H1 (cell line): ENCODE measurements at regions of chr10 and their contacts with region 1.

Region 1: GRCh38 chr10:124659380-124659779 is 84.8 kb downstream of the FAM53B start:
- DNase-seq: no peak
- H3K4me3 ChIP-seq: no peak overlapping the region
- H3K27ac ChIP-seq: no peak overlapping the region
- H3K4me1 ChIP-seq: peaks cover 0 to 3% (median 0%) of the 10 kb centered on the region in 4 experiments; a peak in 2 of 7 replicates
- H3K27me3 ChIP-seq: no peaks in the 10 kb centered on the region
- CTCF ChIP-seq: no peak
- EP300 ChIP-seq: no peak
- POLR2A ChIP-seq: no peak
- RAD21 ChIP-seq: no peak

Region 2: GRCh38 chr10:124647421-124648130 is 11.8 kb before region 1 on chr10:
- CTCF ChIA-PET with region 1: interaction called, 11 read pairs
- POLR2A ChIA-PET with region 1: no interaction called
- DNase-seq: no peak
- H3K4me3 ChIP-seq: no peak overlapping the region
- H3K27ac ChIP-seq: no peak overlapping the region
- H3K4me1 ChIP-seq: peaks cover 0 to 24% (median 17%) of the 10 kb centered on the region in 4 experiments; a peak in 6 of 7 replicates
- H3K27me3 ChIP-seq: no peaks in the 10 kb centered on the region
- CTCF ChIP-seq: peak in 2 of 3 experiments; percentile 15 to 20; a peak in 2 of 4 replicates
- EP300 ChIP-seq: no peak
- POLR2A ChIP-seq: no peak
- RAD21 ChIP-seq: peak in 1 of 2 experiments; percentile 17; a peak in 1 of 4 replicates

Region 3: DNA sequence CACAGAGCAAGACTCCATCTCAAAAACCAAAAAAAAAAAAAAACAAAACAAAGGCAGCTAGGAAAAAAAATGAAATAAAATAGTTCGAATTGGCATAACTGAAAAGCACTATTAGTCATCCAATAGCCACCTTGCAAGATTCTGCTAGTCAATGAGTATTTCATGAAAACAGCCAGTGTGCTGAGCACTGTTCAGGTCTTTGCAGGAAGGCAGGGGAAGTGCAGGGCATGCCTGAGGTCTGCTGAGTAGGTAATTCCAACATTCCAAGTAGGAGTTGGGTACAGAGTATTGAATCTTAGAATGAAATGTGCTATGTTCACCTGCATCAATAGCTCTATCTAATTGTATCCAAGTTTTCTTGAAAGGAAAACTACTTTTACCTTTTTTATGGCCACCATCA is 165.1 kb after region 1 on chr10:
- CTCF ChIA-PET with region 1: no interaction called
- POLR2A ChIA-PET with region 1: no interaction called
- DNase-seq: no peak
- H3K4me3 ChIP-seq: no peak overlapping the region
- H3K27ac ChIP-seq: no peak overlapping the region
- H3K4me1 ChIP-seq: no peaks in the 10 kb centered on the region
- H3K27me3 ChIP-seq: no peaks in the 10 kb centered on the region
- CTCF ChIP-seq: no peak
- EP300 ChIP-seq: no peak
- POLR2A ChIP-seq: no peak
- RAD21 ChIP-seq: no peak